MCF 10A (cell line): ENCODE measurements at regions of chr2 and their contacts with region 1.

Region 1: GRCh38 chr2:53422979-53423378 is 344.6 kb upstream of the CHAC2 start:
- DNase-seq: peak; percentile 65
- H3K4me3 Mint-ChIP-seq: no peak overlapping the region
- H3K27ac Mint-ChIP-seq: no peak overlapping the region
- H3K4me1 Mint-ChIP-seq: no peaks in the 10 kb centered on the region
- H3K27me3 Mint-ChIP-seq: no peaks in the 10 kb centered on the region
- CTCF ChIP-seq: peak; percentile 57

Region 2: GRCh38 chr2:53347269-53347668 is 75.7 kb before region 1 on chr2:
- CTCF ChIA-PET with region 1: no interaction called
- POLR2A ChIA-PET with region 1: no interaction called
- intact Hi-C with region 1: no loop called
- DNase-seq: peak; percentile 47
- H3K4me3 Mint-ChIP-seq: no peak overlapping the region
- H3K27ac Mint-ChIP-seq: no peak overlapping the region
- H3K4me1 Mint-ChIP-seq: no peaks in the 10 kb centered on the region
- H3K27me3 Mint-ChIP-seq: no peaks in the 10 kb centered on the region
- CTCF ChIP-seq: no peak

Region 3: GRCh38 chr2:53403792-53404413 is 19.1 kb before region 1 on chr2:
- CTCF ChIA-PET with region 1: interaction called, 15 read pairs
- POLR2A ChIA-PET with region 1: interaction called, 5 read pairs
- intact Hi-C with region 1: no loop called
- DNase-seq: peak; percentile 86
- H3K4me3 Mint-ChIP-seq: peak overlapping the region; percentile 39
- H3K27ac Mint-ChIP-seq: peak overlapping the region; percentile 85
- H3K4me1 Mint-ChIP-seq: peaks cover 28% of the 10 kb centered on the region
- H3K27me3 Mint-ChIP-seq: no peaks in the 10 kb centered on the region
- CTCF ChIP-seq: no peak

Region 4: DNA sequence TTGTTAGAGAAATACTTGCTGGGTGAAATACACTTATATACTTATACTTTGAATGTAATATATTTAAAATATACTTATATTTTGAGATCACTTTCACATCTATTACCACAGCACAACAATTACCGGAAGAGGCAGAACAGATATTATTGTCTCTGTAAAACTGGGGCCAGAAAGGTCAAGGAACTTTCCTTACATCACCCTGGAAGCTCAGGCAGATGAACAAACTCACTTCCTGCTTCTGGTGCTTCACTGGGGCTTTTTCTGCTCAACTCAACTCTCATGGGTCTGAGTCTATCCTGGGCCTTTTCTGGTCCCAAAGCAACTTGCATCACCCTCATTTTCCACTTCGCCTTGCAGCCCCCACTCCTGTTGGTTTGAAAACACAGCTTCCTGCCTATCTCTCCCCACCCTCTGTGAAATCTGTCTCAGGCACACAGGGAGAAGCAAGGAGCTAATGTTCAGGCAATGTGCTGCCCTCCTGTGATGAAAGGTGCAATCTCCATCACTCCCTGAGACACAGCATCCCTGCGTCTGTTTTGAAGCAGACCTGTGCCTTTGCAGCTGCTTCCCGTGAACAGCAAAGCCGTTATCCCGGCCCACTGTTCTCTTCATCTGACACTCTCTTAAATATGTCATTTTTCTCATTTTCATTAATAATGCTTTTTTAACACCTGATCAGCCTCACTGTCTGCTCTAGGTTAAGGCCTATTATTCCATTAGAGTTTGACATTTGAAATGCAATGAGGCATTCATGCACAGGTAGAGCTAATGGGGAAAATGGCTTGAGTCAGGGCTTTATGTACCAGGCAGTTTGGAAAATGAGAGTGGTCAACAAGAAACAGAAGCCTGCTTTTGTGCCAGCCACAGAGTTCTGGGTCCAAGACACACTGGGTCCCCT is 92.7 kb after region 1 on chr2:
- CTCF ChIA-PET with region 1: no interaction called
- POLR2A ChIA-PET with region 1: no interaction called
- intact Hi-C with region 1: loop called (anchors 1 kb)
- DNase-seq: peak; percentile 23
- H3K4me3 Mint-ChIP-seq: no peak overlapping the region
- H3K27ac Mint-ChIP-seq: no peak overlapping the region
- H3K4me1 Mint-ChIP-seq: peaks cover 19% of the 10 kb centered on the region
- H3K27me3 Mint-ChIP-seq: no peaks in the 10 kb centered on the region
- CTCF ChIP-seq: peak; percentile 24

Region 5: DNA sequence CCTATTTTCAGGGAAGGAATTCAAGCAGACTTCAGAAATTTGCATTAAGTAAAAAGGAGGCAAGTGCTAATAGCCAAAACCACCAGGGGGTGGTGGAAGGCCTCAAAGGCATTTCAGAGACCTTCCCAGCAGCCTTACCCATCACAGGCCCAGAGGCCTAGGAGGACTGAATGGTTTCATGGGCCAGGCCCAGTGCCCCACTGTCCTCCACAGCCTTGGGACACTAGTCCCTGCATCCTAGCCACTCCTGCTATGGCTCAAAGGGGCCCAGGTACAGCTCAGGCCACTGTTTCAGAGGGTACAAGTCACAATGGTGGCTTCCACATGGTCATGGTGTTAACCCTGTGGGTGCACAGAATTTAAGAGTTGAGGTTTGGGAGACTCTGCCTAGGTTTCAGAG is 286.0 kb after region 1 on chr2:
- CTCF ChIA-PET with region 1: interaction called, 26 read pairs
- POLR2A ChIA-PET with region 1: no interaction called
- intact Hi-C with region 1: no loop called
- DNase-seq: no peak
- H3K4me3 Mint-ChIP-seq: no peak overlapping the region
- H3K27ac Mint-ChIP-seq: no peak overlapping the region
- H3K4me1 Mint-ChIP-seq: no peaks in the 10 kb centered on the region
- H3K27me3 Mint-ChIP-seq: no peaks in the 10 kb centered on the region
- CTCF ChIP-seq: no peak

Region 6: DNA sequence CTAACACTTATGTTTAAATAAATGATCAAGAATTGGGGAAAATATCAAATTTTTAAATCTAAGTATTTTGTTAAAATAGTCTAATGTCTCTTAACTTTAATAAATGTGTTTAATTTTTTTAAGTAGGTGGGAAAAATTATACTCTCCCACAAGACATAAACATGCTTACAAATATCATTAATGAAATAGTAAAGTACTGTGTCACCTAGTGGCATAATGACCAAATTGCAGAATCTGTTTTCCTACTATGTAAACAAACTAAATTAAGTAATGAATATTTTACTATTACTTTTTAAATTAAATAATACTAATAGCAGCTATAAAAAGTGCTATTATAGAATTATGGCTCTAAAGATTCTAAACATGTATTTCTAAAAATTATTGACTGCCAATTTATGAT is 292.6 kb after region 1 on chr2:
- CTCF ChIA-PET with region 1: interaction called, 50 read pairs
- POLR2A ChIA-PET with region 1: no interaction called
- intact Hi-C with region 1: loop called (anchors 1 kb)
- DNase-seq: peak; percentile 14
- H3K4me3 Mint-ChIP-seq: no peak overlapping the region
- H3K27ac Mint-ChIP-seq: no peak overlapping the region
- H3K4me1 Mint-ChIP-seq: no peaks in the 10 kb centered on the region
- H3K27me3 Mint-ChIP-seq: no peaks in the 10 kb centered on the region
- CTCF ChIP-seq: peak; percentile 39

Region 7: DNA sequence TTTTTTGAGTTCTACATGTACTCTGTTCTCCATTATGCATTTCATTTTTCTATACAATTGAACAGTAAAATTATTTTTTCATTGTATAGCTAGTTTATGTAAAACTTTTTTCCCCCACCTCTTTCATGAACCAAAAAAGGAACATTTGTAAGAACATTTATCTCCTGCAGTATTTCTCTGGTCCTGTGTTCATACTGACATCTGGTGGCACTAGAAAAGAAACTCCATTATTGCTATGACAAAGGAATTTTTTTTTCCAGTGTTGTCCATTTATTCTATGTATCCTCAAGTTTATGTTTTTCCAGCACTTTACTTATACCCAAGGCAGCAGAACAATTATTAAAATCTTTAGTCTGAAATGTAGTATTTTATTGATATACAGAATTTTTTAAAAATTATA is 317.2 kb after region 1 on chr2:
- CTCF ChIA-PET with region 1: interaction called, 9 read pairs
- POLR2A ChIA-PET with region 1: no interaction called
- intact Hi-C with region 1: loop called (anchors 1 kb)
- DNase-seq: peak; percentile 26
- H3K4me3 Mint-ChIP-seq: no peak overlapping the region
- H3K27ac Mint-ChIP-seq: no peak overlapping the region
- H3K4me1 Mint-ChIP-seq: peaks cover 7% of the 10 kb centered on the region
- H3K27me3 Mint-ChIP-seq: no peaks in the 10 kb centered on the region
- CTCF ChIP-seq: peak; percentile 54

Region 8: GRCh38 chr2:53786705-53787612 is 364.0 kb after region 1 on chr2 and contains the starts of genes ASB3 and ERLEC1:
- CTCF ChIA-PET with region 1: no interaction called
- POLR2A ChIA-PET with region 1: no interaction called
- intact Hi-C with region 1: loop called (anchors 1 kb)
- DNase-seq: peak; percentile 82
- H3K4me3 Mint-ChIP-seq: peak within 1 kb of the TSS; percentile 83
- H3K27ac Mint-ChIP-seq: peak within 1 kb of the TSS; percentile 62
- H3K4me1 Mint-ChIP-seq: peaks cover 12% of the 10 kb centered on the region
- H3K27me3 Mint-ChIP-seq: no peaks in the 10 kb centered on the region
- CTCF ChIP-seq: no peak
- total RNA-seq, gene ASB3: 19.7 and 20.3 TPM in 2 replicates
- total RNA-seq, gene ERLEC1: 51.4 and 68.1 TPM in 2 replicates